MCF 10A (cell line): ENCODE measurements at regions of chr22 and their contacts with region 1.

Region 1: GRCh38 chr22:19824197-19825015 is 30.3 kb downstream of the GNB1L start:
- DNase-seq: peak; percentile 74
- H3K4me3 Mint-ChIP-seq: no peak overlapping the region
- H3K27ac Mint-ChIP-seq: peak overlapping the region; percentile 29
- H3K4me1 Mint-ChIP-seq: peaks cover 23% of the 10 kb centered on the region
- H3K27me3 Mint-ChIP-seq: no peaks in the 10 kb centered on the region
- CTCF ChIP-seq: no peak

Region 2: GRCh38 chr22:19806213-19807145 is 17.9 kb before region 1 on chr22:
- CTCF ChIA-PET with region 1: interaction called, 3 read pairs
- POLR2A ChIA-PET with region 1: interaction called, 18 read pairs
- intact Hi-C with region 1: loop called (anchors 2 kb)
- DNase-seq: peak; percentile 95
- H3K4me3 Mint-ChIP-seq: peak overlapping the region; percentile 56
- H3K27ac Mint-ChIP-seq: peak overlapping the region; percentile 95
- H3K4me1 Mint-ChIP-seq: peaks cover 28% of the 10 kb centered on the region
- H3K27me3 Mint-ChIP-seq: no peaks in the 10 kb centered on the region
- CTCF ChIP-seq: no peak